Dorsolateral prefrontal cortex (tissue), 120 donors: ENCODE measurements at regions of chr16 and their contacts with region 1.

Region 1: GRCh38 chr16:47141773-47142485 is 1.8 kb downstream of the NETO2 start:
- DNase-seq: peak; percentile 64 to 92 (median 88)
- H3K4me3 ChIP-seq: peak overlapping the region; percentile 29 to 79 (median 66)
- H3K27ac ChIP-seq: peak overlapping the region in 34 of 59 donors; percentile 3 to 88 (median 52)
- H3K27me3 ChIP-seq: no peaks in the 10 kb centered on the region
- CTCF ChIP-seq: peak; percentile 72 to 97 (median 91)

Region 2: DNA sequence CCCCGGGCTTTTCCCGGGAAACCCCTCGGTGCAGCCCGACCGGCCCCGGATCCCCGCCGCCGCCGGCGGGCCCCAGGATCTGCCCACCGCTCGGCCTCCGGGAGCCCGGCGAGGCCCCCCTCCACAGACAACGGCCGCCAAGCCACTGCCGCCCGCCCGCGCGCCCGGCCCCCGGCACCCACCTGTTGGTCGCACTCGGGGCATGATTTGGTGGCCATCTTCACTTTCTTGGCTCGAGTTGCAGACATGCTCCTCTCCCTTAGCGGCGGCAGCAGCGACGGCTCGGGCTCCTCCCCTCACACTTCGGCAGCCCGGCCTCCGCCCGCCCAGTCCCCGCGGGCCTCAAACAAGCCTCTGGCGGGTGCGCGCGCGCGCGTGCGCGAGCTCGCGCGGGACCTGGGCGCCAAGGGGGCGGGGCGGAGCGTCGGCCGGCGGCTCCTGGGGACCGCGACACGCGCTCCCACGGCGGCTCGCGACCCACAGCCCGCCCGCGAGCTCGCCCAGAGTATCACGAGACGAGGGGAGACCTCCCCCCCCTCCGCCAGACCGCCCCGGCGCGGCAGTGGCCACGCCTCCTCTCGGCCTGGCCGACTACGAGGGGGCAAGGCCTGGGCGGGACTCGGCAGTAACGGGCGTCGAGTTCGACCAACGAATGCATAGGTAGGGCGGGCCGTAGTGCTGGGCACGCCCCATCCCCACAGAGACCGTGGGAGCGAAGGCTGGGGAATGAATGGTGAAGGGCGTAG is 310.9 kb before region 1 on chr16 and contains the start of gene C16orf87:
- intact Hi-C with region 1: no loop called
- DNase-seq: peak; percentile 82 to 97 (median 95)
- H3K4me3 ChIP-seq: peak within 1 kb of the TSS; percentile 63 to 95 (median 84)
- H3K27ac ChIP-seq: peak within 1 kb of the TSS; percentile 40 to 95 (median 87)
- H3K27me3 ChIP-seq: no peaks in the 10 kb centered on the region
- CTCF ChIP-seq: peak in 14 of 56 donors; percentile 5 to 35 (median 14)
- total RNA-seq, gene C16orf87: 5.9 to 21.2 (median 12.9) TPM

Region 3: DNA sequence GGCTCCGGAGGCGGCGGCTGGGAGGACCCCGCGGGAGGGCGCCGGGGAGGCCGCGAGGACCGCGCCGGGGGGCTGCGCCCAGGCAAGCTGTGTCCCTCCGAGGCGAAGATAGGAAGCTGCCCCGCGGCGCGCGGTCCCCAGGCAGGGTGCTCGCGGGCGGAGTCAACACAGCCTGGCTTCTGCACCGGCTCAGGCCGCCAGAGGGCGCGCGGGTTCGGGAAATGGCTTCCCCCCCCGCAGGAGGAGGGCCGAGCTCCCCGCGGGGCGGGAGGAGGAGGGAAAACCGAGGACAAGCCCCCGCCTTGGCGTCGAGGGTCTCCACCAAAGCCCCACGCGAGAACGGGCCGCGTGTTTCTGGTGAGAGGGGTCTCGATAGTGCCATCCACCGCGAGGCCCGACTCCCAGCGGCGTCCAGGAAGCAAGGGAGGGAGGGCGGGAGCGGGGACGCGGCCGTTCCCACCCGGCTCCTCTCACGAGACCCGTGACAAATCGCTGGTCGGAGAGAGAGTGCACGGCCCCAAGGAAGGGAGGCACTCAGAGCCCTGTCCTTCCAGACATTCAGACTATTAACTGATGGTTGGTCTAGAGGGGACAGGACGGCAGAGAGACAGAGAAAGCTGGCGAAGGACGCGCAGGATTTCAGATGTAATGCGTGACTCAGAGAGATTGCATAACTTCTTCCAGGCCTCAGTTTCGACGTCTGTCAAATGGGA is 104.0 kb before region 1 on chr16:
- intact Hi-C with region 1: loop called (anchors 2 kb)
- DNase-seq: peak; percentile 75 to 93 (median 85)
- H3K4me3 ChIP-seq: peak overlapping the region; percentile 54 to 86 (median 68)
- H3K27ac ChIP-seq: peak overlapping the region in 42 of 59 donors; percentile 5 to 84 (median 52)
- H3K27me3 ChIP-seq: no peaks in the 10 kb centered on the region
- CTCF ChIP-seq: peak; percentile 57 to 98 (median 92)

Region 4: DNA sequence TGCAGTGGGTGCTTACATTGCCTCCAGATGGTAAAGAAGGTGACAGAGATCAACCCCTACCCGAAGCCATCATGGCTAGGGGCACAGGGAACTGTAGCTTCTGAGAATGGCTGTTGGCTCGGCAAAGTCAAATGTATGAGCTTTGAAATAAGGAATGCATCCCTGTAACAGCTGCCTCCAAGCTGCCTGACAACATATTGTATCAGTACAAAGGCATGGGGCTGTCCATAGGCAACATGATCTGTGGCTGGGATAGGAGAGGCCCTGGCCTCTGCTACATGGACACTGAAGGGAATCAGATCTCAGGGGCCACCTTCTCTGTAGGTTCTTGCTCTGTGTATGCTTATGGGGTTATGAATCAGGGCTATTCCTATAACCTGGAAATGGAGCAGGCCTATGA is 121.0 kb after region 1 on chr16:
- intact Hi-C with region 1: no loop called
- DNase-seq: no peak
- H3K4me3 ChIP-seq: no peak overlapping the region
- H3K27ac ChIP-seq: no peak overlapping the region
- H3K27me3 ChIP-seq: no peaks in the 10 kb centered on the region
- CTCF ChIP-seq: no peak

Region 5: GRCh38 chr16:47460711-47461597 is 319.0 kb after region 1 on chr16 and contains the starts of genes ITFG1 and PHKB:
- intact Hi-C with region 1: loop called in 1 of 2 experiments (anchors 10 kb)
- DNase-seq: peak; percentile 85 to 94 (median 90)
- H3K4me3 ChIP-seq: peak within 1 kb of the TSS; percentile 71 to 100 (median 92)
- H3K27ac ChIP-seq: peak within 1 kb of the TSS; percentile 93 to 100 (median 99)
- H3K27me3 ChIP-seq: no peaks in the 10 kb centered on the region
- CTCF ChIP-seq: peak in 38 of 56 donors; percentile 2 to 63 (median 32)
- total RNA-seq, gene ITFG1: 40.7 to 175 (median 105) TPM
- total RNA-seq, gene PHKB: 69.5 to 136 (median 95.1) TPM

Region 6: GRCh38 chr16:48117217-48118105 is 975.5 kb after region 1 on chr16:
- intact Hi-C with region 1: loop called in 1 of 2 experiments (anchors 5 kb)
- DNase-seq: peak in 3 of 10 donors; percentile 35 to 37 (median 36)
- H3K4me3 ChIP-seq: no peak overlapping the region
- H3K27ac ChIP-seq: no peak overlapping the region
- H3K27me3 ChIP-seq: no peaks in the 10 kb centered on the region
- CTCF ChIP-seq: peak in 55 of 56 donors; percentile 31 to 78 (median 66)

Region 7: DNA sequence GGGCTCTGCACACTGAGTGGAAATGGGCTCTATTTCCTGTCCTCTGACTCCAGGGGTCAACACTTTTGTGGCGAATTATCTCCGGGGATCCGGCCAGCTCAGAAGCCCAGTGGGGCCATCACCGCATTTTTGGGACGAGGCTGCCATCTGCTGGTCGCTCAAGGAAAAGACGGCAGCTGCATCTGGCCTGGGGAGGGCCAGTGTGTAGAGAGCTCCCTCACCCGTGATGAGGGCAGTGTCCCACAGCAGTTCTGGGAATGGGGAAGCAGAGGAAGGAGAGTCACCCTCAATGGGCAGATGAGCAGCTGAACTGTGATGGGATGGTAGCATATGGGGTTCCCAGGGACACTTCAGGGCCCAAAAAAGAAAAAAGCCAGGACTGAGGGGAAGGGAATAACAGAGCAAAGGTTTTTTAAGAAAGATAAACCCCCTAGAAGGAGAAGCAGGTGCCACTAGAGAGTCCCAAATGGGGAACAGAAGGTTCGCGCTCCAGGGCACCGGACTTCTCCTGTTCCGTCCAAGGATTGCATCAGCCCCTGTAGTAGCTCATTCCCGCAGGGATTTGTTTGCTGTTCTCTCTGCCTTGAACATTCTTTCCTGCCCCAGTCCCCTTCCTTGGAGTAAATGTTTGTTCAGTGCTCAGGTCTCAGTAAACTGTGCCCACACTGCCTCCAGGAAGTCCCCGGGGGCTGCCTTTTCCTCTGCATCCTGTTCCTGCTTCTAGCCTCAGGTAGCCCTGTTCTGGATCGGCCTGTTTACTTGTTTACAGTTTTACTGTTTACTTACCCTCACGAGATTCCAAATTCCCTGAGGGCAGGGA is 1023.2 kb after region 1 on chr16:
- intact Hi-C with region 1: loop called in 1 of 2 experiments (anchors 2 kb)
- DNase-seq: peak; percentile 66 to 90 (median 78)
- H3K4me3 ChIP-seq: peak overlapping the region in 26 of 59 donors; percentile 10 to 47 (median 26)
- H3K27ac ChIP-seq: peak overlapping the region in 2 of 59 donors; percentile 14 to 18
- H3K27me3 ChIP-seq: no peaks in the 10 kb centered on the region
- CTCF ChIP-seq: peak; percentile 62 to 94 (median 89)